ENCODE measurements at regions of chr6 and their contacts with region 1.

Region 1: DNA sequence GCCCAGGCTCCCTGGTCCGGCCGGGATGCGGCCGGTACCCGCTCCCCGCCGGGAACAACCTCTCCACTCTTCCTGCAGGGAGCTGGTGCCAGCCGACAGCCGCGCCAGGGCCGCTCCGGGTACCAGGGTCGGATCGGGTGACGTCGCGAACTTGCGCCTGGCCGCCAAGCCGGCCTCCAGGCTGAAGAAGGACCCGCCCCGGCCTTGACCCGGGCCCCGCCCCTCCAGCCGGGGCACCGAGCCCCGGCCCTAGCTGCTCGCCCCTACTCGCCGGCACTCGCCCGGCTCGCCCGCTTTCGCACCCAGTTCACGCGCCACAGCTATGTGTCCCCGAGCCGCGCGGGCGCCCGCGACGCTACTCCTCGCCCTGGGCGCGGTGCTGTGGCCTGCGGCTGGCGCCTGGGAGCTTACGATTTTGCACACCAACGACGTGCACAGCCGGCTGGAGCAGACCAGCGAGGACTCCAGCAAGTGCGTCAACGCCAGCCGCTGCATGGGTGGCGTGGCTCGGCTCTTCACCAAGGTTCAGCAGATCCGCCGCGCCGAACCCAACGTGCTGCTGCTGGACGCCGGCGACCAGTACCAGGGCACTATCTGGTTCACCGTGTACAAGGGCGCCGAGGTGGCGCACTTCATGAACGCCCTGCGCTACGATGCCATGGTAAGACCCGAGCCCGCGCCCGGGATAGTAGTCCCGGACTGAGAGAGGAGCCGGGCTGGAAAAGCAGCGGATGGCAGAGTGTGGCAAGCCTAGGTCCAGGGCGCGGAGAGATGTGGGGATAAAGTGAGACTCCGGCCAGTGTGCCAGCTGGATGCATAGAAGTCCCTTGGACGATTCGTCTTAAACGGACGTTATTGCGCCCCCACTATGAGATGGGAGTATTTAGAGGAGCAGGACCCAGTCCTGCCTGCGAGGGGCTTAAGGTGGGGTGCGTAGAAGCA is at the start of gene NT5E:
- DNase-seq: peak; percentile 67
- ATAC-seq: peak; percentile 77
- H3K4me3 Mint-ChIP-seq: peak within 1 kb of the TSS; percentile 97
- H3K27ac Mint-ChIP-seq: peak within 1 kb of the TSS; percentile 94
- H3K4me1 Mint-ChIP-seq: peaks cover 68% of the 10 kb centered on the region
- H3K27me3 Mint-ChIP-seq: peaks cover 10% of the 10 kb centered on the region
- CTCF ChIP-seq: no peak
- total RNA-seq, gene NT5E: 5.8 and 6.6 TPM in 2 replicates

Region 2: DNA sequence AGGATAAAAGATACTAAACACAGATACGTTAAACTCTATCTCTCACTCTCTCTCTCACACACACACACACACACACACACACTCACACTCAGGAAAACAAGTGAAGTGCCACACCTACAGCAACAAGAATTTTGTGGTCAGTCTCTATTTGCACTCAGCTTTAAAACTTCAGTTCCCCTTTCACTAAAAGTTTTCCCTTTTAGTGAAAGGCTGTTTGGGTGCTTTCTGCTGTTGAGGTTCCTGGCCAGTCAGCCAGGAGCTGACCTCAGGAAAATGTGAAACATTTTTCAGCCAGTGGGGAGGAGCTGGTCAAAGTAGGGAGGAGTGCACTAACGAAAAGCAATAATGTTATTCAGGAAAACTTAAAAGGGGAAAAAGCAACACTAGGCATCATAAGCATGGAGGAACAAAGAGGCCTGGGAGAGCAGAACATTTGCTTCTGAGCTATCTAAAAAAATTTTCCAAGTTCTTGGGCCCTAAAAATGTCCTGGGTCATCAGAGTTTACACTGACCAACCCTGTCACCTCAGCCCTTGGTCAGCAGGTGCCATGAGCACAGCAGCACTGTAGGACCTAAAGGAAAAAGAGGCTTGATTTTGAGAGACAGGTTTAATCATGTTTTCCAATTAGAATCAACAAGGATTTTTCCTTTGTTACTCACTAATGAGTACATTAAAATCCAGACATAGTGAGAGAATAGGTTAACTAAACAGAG is 30.9 kb before region 1 on chr6:
- CTCF ChIA-PET with region 1: interaction called, 5 read pairs
- POLR2A ChIA-PET with region 1: interaction called, 8 read pairs
- intact Hi-C with region 1: loop called (anchors 1 kb)
- DNase-seq: no peak
- ATAC-seq: peak; percentile 28
- H3K4me3 Mint-ChIP-seq: peak overlapping the region; percentile 67
- H3K27ac Mint-ChIP-seq: peak overlapping the region; percentile 84
- H3K4me1 Mint-ChIP-seq: peaks cover 37% of the 10 kb centered on the region
- H3K27me3 Mint-ChIP-seq: peaks cover 2% of the 10 kb centered on the region
- CTCF ChIP-seq: no peak

Region 3: GRCh38 chr6:85460921-85461797 is 11.1 kb after region 1 on chr6:
- CTCF ChIA-PET with region 1: interaction called, 9 read pairs
- POLR2A ChIA-PET with region 1: interaction called, 25 read pairs
- intact Hi-C with region 1: loop called (anchors 1 kb)
- DNase-seq: no peak
- ATAC-seq: peak; percentile 47
- H3K4me3 Mint-ChIP-seq: peak overlapping the region; percentile 12
- H3K27ac Mint-ChIP-seq: peak overlapping the region; percentile 62
- H3K4me1 Mint-ChIP-seq: peaks cover 93% of the 10 kb centered on the region
- H3K27me3 Mint-ChIP-seq: no peaks in the 10 kb centered on the region
- CTCF ChIP-seq: no peak

Region 4: DNA sequence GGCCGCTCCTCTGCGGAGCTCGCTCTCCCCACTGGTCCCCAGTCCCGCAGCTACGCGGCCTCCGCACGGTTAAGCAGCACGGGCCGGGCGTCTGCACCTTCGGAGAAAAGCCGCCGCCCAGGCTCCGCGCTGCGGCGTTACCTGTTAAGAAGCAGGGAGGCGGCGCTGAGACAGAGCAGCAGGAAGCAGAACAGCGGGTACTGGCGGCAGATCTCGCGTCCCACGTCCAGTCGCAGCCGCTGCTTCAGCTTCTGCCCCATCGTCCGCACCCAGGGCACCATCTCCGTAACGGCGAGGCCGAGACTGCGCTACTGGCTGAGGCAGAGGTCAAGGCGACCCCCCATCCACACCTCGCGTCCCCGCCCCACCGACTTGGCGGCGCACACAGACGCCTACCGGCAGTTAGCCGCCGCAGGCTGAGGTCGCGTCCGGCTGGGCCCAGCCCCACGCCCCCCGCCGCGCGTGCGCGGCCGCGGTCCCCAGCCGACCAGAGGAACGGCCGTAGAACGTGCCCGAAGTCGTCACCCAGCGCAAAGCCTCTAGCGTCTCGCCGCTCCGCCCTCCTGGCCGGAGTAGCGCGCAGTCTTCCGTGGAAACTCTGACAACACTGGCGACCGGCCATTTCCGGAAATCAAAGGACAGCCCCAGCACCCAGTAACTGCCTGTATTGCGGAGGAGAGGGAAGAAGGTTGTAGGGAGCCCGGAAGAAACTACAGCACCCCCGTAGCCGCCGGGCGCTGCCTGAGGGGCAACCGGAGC is 143.5 kb after region 1 on chr6 and contains the start of gene SNX14:
- CTCF ChIA-PET with region 1: no interaction called
- POLR2A ChIA-PET with region 1: interaction called, 7 read pairs
- intact Hi-C with region 1: loop called (anchors 1 kb)
- DNase-seq: peak; percentile 82
- ATAC-seq: peak; percentile 87
- H3K4me3 Mint-ChIP-seq: peak within 1 kb of the TSS; percentile 99
- H3K27ac Mint-ChIP-seq: peak within 1 kb of the TSS; percentile 98
- H3K4me1 Mint-ChIP-seq: peaks cover 47% of the 10 kb centered on the region
- H3K27me3 Mint-ChIP-seq: no peaks in the 10 kb centered on the region
- CTCF ChIP-seq: no peak
- total RNA-seq, gene SNX14: 61.6 and 70.8 TPM in 2 replicates

Measured in activated B cell treated with CpG ODN at 0.5 μM for 24 hours (primary cell).